ENCODE measurements at regions of chr10 and their contacts with region 1.

Region 1: DNA sequence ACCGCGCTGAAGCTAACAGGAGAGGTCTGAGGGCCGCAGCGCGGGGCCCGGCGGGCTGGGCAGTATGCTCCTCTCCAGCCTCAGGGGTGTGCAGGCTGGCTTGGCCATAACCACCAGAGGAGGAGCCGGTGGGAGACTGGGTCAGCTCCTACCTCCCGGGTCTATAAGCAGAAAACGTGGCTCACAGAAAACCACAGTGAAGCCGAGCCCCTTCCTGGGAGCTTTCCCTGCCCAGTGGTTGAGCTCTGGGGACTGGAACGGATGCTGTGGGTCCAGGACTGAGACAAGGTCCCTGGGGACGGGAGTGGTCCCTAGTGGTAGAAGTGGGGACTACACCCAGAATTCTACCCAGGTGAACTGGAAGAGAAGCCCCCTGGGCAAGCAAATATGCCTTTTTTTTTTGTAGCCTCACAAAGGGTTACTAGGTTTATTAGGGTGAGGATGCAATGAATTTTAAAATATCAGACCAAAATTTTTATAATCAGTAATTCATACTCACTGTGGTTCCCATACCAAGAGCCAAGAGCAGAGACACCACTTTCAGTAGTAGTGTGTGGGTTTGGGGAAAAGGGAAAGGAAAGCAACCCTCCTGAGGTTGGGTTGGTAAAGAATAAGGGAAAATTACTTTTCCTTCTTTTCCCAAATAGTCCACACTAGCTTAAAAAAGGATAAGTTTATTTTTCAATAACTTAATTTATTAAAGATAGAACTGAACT is 67.9 kb upstream of the PRKCQ start:
- DNase-seq: peak; percentile 53
- H3K4me3 Mint-ChIP-seq: no peak overlapping the region
- H3K27ac Mint-ChIP-seq: no peak overlapping the region
- H3K4me1 Mint-ChIP-seq: peaks cover 47% of the 10 kb centered on the region
- H3K27me3 Mint-ChIP-seq: no peaks in the 10 kb centered on the region

Region 2: GRCh38 chr10:6593241-6593671 is 54.7 kb before region 1 on chr10:
- intact Hi-C with region 1: loop called (anchors 1 kb)
- DNase-seq: no peak
- H3K4me3 Mint-ChIP-seq: peak overlapping the region; percentile 31
- H3K27ac Mint-ChIP-seq: peak overlapping the region; percentile 65
- H3K4me1 Mint-ChIP-seq: peaks cover 81% of the 10 kb centered on the region
- H3K27me3 Mint-ChIP-seq: no peaks in the 10 kb centered on the region

Region 3: DNA sequence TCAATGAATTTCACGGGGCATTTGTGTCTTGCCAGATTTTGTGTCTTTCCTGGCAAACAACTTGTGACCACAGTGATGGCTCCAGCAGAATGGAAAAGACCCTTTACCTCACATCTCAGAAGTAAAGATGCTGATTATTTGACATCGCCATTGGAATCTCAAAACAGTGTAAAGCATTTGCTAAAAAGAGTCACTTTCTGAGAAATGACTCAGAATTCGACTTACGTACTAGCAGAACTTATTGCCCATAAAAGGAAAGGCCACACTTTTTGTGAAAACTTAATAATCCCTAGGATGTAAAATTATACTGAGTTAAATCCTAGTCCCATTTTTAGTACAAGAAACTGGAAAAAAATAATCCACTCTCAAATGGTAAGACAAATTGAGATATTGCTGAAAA is 32.0 kb before region 1 on chr10:
- intact Hi-C with region 1: loop called (anchors 2 kb)
- DNase-seq: no peak
- H3K4me3 Mint-ChIP-seq: no peak overlapping the region
- H3K27ac Mint-ChIP-seq: peak overlapping the region; percentile 89
- H3K4me1 Mint-ChIP-seq: peaks cover 73% of the 10 kb centered on the region
- H3K27me3 Mint-ChIP-seq: no peaks in the 10 kb centered on the region